Dorsolateral prefrontal cortex (tissue), 120 donors: ENCODE measurements at regions of chr1 and their contacts with region 1.

Region 1: GRCh38 chr1:9181176-9181906 is 52.4 kb upstream of the GPR157 start:
- DNase-seq: peak in 8 of 10 donors; percentile 44 to 73 (median 52)
- H3K4me3 ChIP-seq: peak overlapping the region; percentile 47 to 83 (median 70)
- H3K27ac ChIP-seq: peak overlapping the region in 41 of 59 donors; percentile 0 to 79 (median 48)
- H3K27me3 ChIP-seq: peaks cover 0 to 17% (median 0%) of the 10 kb centered on the region in 45 donors
- CTCF ChIP-seq: peak; percentile 68 to 96 (median 90)

Region 2: GRCh38 chr1:9143250-9143649 is 38.1 kb before region 1 on chr1:
- intact Hi-C with region 1: loop called in 1 of 2 experiments (anchors 5 kb)
- DNase-seq: peak in 1 of 10 donors; percentile 26
- H3K4me3 ChIP-seq: no peak overlapping the region
- H3K27ac ChIP-seq: no peak overlapping the region
- H3K27me3 ChIP-seq: no peaks in the 10 kb centered on the region
- CTCF ChIP-seq: no peak

Region 3: GRCh38 chr1:9249534-9250410 is 68.4 kb after region 1 on chr1:
- intact Hi-C with region 1: loop called in 1 of 2 experiments (anchors 5 kb)
- DNase-seq: peak in 2 of 10 donors; percentile 45 to 56
- H3K4me3 ChIP-seq: peak overlapping the region in 1 of 59 donors; percentile 49
- H3K27ac ChIP-seq: peak overlapping the region in 50 of 59 donors; percentile 3 to 93 (median 68)
- H3K27me3 ChIP-seq: no peaks in the 10 kb centered on the region
- CTCF ChIP-seq: peak in 53 of 56 donors; percentile 25 to 64 (median 48)